ENCODE measurements at regions of chr11 and their contacts with region 1.

Region 1: GRCh38 chr11:6443269-6444003 is 2.6 kb upstream of the HPX start:
- DNase-seq: peak; percentile 62
- H3K4me3 Mint-ChIP-seq: no peak overlapping the region
- H3K27ac Mint-ChIP-seq: no peak overlapping the region
- H3K4me1 Mint-ChIP-seq: no peaks in the 10 kb centered on the region
- H3K27me3 Mint-ChIP-seq: peaks cover 3% of the 10 kb centered on the region

Region 2: GRCh38 chr11:6362873-6363678 is 80.4 kb before region 1 on chr11:
- CTCF ChIA-PET with region 1: interaction called, 22 read pairs
- POLR2A ChIA-PET with region 1: no interaction called
- DNase-seq: peak; percentile 78
- H3K4me3 Mint-ChIP-seq: no peak overlapping the region
- H3K27ac Mint-ChIP-seq: no peak overlapping the region
- H3K4me1 Mint-ChIP-seq: no peaks in the 10 kb centered on the region
- H3K27me3 Mint-ChIP-seq: no peaks in the 10 kb centered on the region

Region 3: DNA sequence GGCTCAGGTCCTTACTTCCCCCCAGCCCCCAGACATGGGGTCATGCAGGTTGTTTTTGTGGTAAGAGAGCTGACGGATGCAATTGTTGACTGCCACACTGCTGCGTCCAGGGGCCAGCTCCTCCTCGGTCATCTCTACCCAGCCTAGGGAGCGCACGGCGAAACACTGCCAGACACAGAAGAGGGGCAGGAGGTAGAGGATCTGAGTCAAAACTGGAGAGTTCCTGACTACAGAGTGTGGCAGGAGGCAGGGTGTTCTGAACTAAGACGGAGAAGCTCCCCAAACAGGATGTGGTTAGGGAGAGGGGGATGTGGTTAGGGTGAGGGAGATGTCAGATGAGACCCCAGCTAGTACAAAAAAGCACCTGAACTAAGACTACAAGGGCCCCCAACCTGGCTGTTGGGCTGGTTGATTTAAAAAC is 40.9 kb before region 1 on chr11:
- CTCF ChIA-PET with region 1: interaction called, 12 read pairs
- POLR2A ChIA-PET with region 1: interaction called, 4 read pairs
- DNase-seq: peak; percentile 87
- H3K4me3 Mint-ChIP-seq: peak overlapping the region; percentile 67
- H3K27ac Mint-ChIP-seq: peak overlapping the region; percentile 97
- H3K4me1 Mint-ChIP-seq: peaks cover 64% of the 10 kb centered on the region
- H3K27me3 Mint-ChIP-seq: no peaks in the 10 kb centered on the region

Region 4: DNA sequence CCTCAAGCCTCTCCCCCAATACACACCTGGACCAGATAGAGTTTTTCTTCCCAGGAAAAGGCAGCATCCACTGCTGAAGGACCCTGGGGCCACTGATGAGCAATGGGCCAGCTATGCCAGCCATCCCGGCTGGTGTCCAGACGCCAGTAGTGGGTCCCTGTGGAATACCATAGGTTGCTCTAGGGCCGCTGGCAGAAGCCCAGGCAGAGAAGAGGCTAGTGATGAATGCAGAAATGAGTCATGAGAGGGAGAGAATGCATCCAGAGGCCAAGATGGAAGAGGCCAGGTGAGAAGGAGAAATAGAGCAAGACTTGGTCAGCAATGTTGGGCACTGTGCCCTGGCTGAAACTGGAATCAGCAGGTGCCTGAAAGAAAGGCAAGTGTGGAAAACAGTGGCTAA is 11.6 kb before region 1 on chr11:
- CTCF ChIA-PET with region 1: interaction called, 17 read pairs
- POLR2A ChIA-PET with region 1: no interaction called
- DNase-seq: no peak
- H3K4me3 Mint-ChIP-seq: no peak overlapping the region
- H3K27ac Mint-ChIP-seq: no peak overlapping the region
- H3K4me1 Mint-ChIP-seq: peaks cover 4% of the 10 kb centered on the region
- H3K27me3 Mint-ChIP-seq: peaks cover 8% of the 10 kb centered on the region

Region 5: DNA sequence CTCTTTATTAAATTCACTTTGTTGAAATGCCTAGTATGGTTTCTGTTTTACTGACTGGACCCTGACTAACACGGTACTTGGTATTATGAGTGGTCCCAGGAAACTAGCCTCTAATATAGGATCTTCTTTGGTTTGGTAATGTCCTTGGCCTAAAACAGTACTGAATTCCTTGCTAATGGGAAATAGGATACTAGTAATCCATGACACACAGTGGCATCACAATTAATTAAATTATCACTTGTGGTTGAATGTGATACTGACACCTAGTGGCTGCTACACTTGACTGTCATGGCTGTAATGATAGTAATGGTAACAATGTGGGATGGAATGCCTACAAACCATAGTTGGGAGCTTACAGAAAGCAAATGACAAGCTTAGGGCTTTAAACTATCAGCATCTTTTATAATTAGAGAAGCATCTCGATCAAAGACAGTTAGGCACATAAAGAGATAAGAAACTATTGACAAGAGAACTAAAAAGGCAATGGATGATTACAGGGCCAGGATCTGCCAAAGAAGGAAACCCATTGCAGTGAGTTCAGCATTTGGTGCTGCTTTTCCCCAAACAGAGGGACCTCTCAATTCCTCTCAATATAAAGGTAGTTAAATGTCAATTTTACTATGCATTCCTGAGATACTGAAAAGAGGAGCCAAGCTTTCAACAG is 62.3 kb after region 1 on chr11:
- CTCF ChIA-PET with region 1: interaction called, 16 read pairs
- POLR2A ChIA-PET with region 1: no interaction called
- DNase-seq: no peak
- H3K4me3 Mint-ChIP-seq: no peak overlapping the region
- H3K27ac Mint-ChIP-seq: no peak overlapping the region
- H3K4me1 Mint-ChIP-seq: peaks cover 4% of the 10 kb centered on the region
- H3K27me3 Mint-ChIP-seq: no peaks in the 10 kb centered on the region

Measured in activated CD4-positive, alpha-beta memory T cell treated with anti-CD3 and anti-CD28 coated beads, Interleukin-2, amount 10 ng/mL, durations not matched to agents 7 days and 5 days (primary cell).